Activated T-helper 1 cell treated with anti-CD3 and anti-CD28 coated beads, Interleukin-12 subunit alpha, Interleukin-12 subunit beta, Interleukin-2, Interleukin-4 antibody, amounts not matched to agents 30 ng/mL and 10 ng/mL and 1 ng/mL, durations not matched to agents 14 hours and 24 hours and 36 hours (primary cell): ENCODE measurements at regions of chr3 and their contacts with region 1.

Region 1: GRCh38 chr3:134485718-134486576 is at the starts of genes ANAPC13 and CEP63:
- DNase-seq: peak; percentile 87
- H3K4me3 Mint-ChIP-seq: peak within 1 kb of the TSS; percentile 92
- H3K27ac Mint-ChIP-seq: peak within 1 kb of the TSS; percentile 100
- H3K4me1 Mint-ChIP-seq: peaks cover 47% of the 10 kb centered on the region
- H3K27me3 Mint-ChIP-seq: peaks cover 3% of the 10 kb centered on the region
- total RNA-seq, gene ANAPC13: 25.2 and 26.8 TPM in 2 replicates
- total RNA-seq, gene CEP63: 20.0 and 22.2 TPM in 2 replicates

Region 2: GRCh38 chr3:133661454-133662277 is 824.3 kb before region 1 on chr3 and contains the start of gene TOPBP1:
- intact Hi-C with region 1: loop called (anchors 1 kb)
- DNase-seq: peak; percentile 90
- H3K4me3 Mint-ChIP-seq: peak within 1 kb of the TSS; percentile 99
- H3K27ac Mint-ChIP-seq: peak within 1 kb of the TSS; percentile 99
- H3K4me1 Mint-ChIP-seq: peaks cover 47% of the 10 kb centered on the region
- H3K27me3 Mint-ChIP-seq: peaks cover 2% of the 10 kb centered on the region
- total RNA-seq, gene TOPBP1: 88.5 and 94.1 TPM in 2 replicates

Region 3: DNA sequence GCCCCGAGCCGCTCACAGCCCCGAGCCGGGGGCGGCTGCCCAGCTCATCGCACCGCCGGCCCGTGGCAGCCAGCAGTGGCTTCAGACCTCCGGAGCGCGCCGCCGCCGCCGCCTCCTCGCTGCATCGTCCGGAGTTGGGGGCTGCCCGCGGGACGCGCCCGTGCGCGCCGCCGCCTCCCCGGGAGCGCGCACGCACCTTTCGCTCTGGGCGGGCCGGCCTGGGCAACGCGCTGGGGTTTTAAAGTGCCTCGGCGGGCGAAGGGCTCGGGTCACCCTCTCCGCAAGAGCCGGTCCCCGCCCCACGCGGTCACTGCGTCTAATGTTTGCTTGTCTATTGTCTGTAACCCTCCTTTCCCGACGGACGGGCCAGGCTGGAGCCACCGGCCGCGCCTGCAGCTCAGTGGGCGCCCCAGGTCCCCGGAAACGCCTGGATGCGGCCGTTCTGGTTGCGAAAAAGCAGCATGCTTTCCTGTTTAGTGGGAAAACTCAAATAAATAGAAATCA is 235.2 kb before region 1 on chr3 and contains the start of gene RYK:
- intact Hi-C with region 1: loop called (anchors 2 kb)
- DNase-seq: peak; percentile 66
- H3K4me3 Mint-ChIP-seq: peak within 1 kb of the TSS; percentile 88
- H3K27ac Mint-ChIP-seq: peak within 1 kb of the TSS; percentile 89
- H3K4me1 Mint-ChIP-seq: peaks cover 35% of the 10 kb centered on the region
- H3K27me3 Mint-ChIP-seq: peaks cover 35% of the 10 kb centered on the region
- total RNA-seq, gene RYK: 15.8 and 16.8 TPM in 2 replicates

Region 4: GRCh38 chr3:134453631-134454030 is 32.3 kb before region 1 on chr3:
- intact Hi-C with region 1: no loop called
- DNase-seq: no peak
- H3K4me3 Mint-ChIP-seq: no peak overlapping the region
- H3K27ac Mint-ChIP-seq: no peak overlapping the region
- H3K4me1 Mint-ChIP-seq: no peaks in the 10 kb centered on the region
- H3K27me3 Mint-ChIP-seq: peaks cover 27% of the 10 kb centered on the region

Region 5: DNA sequence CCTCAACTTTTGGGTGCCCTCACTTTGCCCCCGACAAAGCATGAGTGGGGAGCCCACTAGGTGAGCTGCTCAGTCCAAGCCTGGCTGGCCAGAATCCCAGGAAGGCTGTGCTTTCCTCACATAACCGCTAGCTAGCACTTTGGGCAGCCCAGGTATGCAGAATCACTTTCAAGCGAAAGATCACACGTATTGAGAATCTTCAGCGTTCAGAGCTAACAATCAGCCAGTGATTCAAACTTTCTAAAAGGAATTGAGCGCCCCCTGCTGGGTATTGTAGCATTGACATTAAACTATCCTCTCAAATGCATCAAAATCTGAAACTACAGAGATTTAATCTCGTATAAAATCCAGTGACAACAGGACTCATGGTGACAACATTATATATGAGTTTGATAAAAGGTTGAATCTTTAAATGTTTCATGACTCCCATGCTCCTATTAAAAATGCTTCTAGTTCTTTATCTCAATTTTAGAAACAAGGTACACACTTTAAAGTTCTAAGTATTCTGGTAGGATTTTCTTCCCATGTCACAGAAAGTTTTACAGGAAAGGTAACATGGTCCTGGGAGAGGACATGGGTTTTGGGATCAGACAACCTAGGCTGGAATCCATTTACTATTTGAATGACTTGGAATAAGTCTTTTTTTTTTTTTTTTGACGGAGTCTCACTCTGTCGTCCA is 11.9 kb before region 1 on chr3:
- intact Hi-C with region 1: loop called (anchors 2 kb)
- DNase-seq: peak; percentile 63
- H3K4me3 Mint-ChIP-seq: no peak overlapping the region
- H3K27ac Mint-ChIP-seq: no peak overlapping the region
- H3K4me1 Mint-ChIP-seq: no peaks in the 10 kb centered on the region
- H3K27me3 Mint-ChIP-seq: peaks cover 1% of the 10 kb centered on the region

Region 6: DNA sequence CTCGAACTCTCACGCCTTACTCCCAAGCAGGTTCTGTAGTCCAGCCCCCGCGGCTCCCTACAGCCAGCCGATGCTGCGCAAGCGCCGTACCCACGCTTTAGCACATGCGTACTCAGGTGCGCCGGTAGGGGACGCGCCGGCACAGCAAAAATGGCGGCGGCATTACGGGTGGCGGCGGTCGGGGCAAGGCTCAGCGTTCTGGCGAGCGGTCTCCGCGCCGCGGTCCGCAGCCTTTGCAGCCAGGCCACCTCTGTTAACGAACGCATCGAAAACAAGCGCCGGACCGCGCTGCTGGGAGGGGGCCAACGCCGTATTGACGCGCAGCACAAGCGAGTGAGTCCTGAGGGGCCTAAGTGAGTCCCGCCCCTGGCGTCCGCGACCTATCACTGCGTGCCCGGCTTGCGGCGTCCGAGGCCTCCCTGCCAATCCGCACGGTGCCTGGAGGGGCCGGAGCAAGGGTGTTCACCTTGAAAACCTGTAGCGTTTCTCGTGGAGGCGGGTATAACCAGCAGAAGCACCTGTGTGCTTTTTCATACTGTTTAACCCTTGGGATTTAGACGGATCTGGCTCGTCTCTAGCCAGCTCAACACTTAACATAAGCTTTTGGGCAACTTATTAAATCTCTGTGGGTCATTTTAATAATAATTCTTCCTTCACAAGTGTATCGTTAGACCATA is 1764.4 kb after region 1 on chr3 and contains the start of gene PCCB:
- intact Hi-C with region 1: loop called (anchors 1 kb)
- DNase-seq: peak; percentile 88
- H3K4me3 Mint-ChIP-seq: peak within 1 kb of the TSS; percentile 89
- H3K27ac Mint-ChIP-seq: peak within 1 kb of the TSS; percentile 91
- H3K4me1 Mint-ChIP-seq: peaks cover 21% of the 10 kb centered on the region
- H3K27me3 Mint-ChIP-seq: no peaks in the 10 kb centered on the region
- total RNA-seq, gene PCCB: 41.4 and 41.7 TPM in 2 replicates